HepG2 (cell line): ENCODE measurements at regions of chr20 and their contacts with region 1.

Region 1: DNA sequence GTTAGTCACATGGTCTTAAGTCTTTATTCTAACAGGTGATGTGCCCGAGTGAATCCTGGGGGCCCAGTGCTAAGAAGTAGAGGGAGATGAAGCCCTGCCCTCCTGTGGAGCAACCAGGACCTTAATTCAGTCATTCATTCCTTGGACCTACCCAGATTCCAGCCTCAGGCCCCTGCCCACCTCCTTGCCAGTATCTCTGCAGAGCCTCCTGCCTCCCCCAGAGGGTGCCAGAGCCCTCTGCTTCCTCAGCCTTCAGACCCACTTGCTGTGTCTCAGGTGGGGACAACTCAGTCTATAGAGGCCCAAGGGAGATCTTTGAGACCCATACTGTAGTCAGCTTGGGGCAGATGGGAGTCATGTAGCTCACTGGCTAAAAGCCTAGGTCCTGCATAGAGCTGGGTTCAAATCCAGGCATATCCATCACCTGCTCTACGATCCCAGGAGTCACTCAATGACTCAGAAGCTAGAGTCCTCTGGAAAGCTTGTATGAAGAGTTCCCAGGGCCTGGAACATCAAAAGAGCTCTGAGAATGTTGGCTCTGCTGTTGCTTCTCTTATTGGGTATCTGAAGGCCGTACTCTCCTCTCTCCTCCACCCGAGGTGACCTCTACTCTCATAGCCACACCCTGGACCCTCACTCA is 3.9 kb upstream of the SIGLEC1 start:
- DNase-seq: peak; percentile 65
- ATAC-seq: peak; percentile 94
- H3K4me3 ChIP-seq: no peak overlapping the region
- H3K27ac ChIP-seq: no peak overlapping the region
- H3K4me1 ChIP-seq: no peaks in the 10 kb centered on the region
- H3K27me3 ChIP-seq: peaks cover 0 to 26% of the 10 kb centered on the region in 2 experiments; a peak in 4 of 5 replicates
- CTCF ChIP-seq: peak; percentile 96
- EP300 ChIP-seq: no peak
- POLR2A ChIP-seq: no peak
- RAD21 ChIP-seq: peak; percentile 86

Region 2: GRCh38 chr20:3727401-3728021 is 11.2 kb after region 1 on chr20:
- CTCF ChIA-PET with region 1: no interaction called
- POLR2A ChIA-PET with region 1: no interaction called
- in situ Hi-C with region 1: no loop called
- intact Hi-C with region 1: no loop called
- DNase-seq: no peak
- ATAC-seq: no peak
- H3K4me3 ChIP-seq: no peak overlapping the region
- H3K27ac ChIP-seq: no peak overlapping the region
- H3K4me1 ChIP-seq: no peaks in the 10 kb centered on the region
- H3K27me3 ChIP-seq: peaks cover 18 to 62% of the 10 kb centered on the region in 2 experiments
- CTCF ChIP-seq: no peak
- EP300 ChIP-seq: no peak
- POLR2A ChIP-seq: no peak
- RAD21 ChIP-seq: no peak

Region 3: DNA sequence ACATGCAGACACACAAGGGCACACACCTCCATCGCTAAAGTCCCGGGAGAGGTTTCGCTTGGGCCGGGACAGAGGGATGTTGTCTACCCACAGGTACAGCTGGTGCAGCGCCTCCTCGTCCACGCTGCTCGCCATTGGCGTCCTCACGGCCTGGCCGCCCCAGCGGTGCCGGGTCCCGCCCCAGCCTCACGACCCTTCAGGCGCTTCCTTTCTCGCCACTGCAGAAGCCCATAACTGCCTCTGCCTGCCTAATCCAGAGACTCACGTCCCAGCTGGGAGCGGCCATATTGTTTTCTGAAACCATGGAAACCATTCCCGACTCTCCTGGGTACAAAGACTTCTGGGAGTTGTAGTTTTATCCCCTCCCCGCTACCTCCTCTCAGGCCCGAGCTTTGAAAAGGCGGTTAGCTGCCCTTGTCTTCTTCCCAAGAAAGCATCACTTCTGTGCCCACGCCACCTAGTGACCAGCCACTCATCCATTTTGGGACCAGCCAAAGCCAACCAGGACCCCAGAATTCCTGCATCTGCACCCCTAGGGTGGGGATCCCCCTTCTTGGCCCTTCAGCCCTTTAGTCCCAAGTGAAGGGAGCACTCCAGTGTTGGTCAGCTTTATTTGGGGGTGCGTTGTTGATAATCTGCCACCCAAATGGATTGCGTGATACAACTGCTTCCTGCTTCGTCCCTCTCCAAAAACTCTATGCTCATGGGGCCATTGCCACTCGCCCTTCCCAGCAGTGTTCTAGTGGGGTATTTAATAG is 65.0 kb after region 1 on chr20 and contains the start of gene SPEF1:
- CTCF ChIA-PET with region 1: interaction called, 7 read pairs
- POLR2A ChIA-PET with region 1: interaction called, 3 read pairs
- in situ Hi-C with region 1: no loop called
- intact Hi-C with region 1: loop called (anchors 1 kb)
- DNase-seq: peak; percentile 98
- ATAC-seq: peak; percentile 80
- H3K4me3 ChIP-seq: peak within 1 kb of the TSS; percentile 51 to 75 (median 59); a peak in 5 of 6 replicates
- H3K27ac ChIP-seq: no peak within 1 kb of the TSS
- H3K4me1 ChIP-seq: peaks cover 76% of the 10 kb centered on the region
- H3K27me3 ChIP-seq: peaks cover 2 to 31% of the 10 kb centered on the region in 2 experiments
- CTCF ChIP-seq: peak; percentile 79
- EP300 ChIP-seq: no peak
- POLR2A ChIP-seq: no peak
- RAD21 ChIP-seq: peak; percentile 63
- total RNA-seq, gene SPEF1: 0.27 and 0.32 TPM in 2 replicates

Region 4: GRCh38 chr20:4082406-4083097 is 366.2 kb after region 1 on chr20:
- CTCF ChIA-PET with region 1: no interaction called
- POLR2A ChIA-PET with region 1: no interaction called
- in situ Hi-C with region 1: no loop called
- intact Hi-C with region 1: loop called (anchors 1 kb)
- DNase-seq: peak; percentile 89
- ATAC-seq: peak; percentile 70
- H3K4me3 ChIP-seq: peak overlapping the region; percentile 4 to 63 (median 34); a peak in 4 of 6 replicates
- H3K27ac ChIP-seq: no peak overlapping the region
- H3K4me1 ChIP-seq: peaks cover 39% of the 10 kb centered on the region
- H3K27me3 ChIP-seq: peaks cover 0 to 8% of the 10 kb centered on the region in 2 experiments; a peak in 2 of 5 replicates
- CTCF ChIP-seq: peak; percentile 19; the same call in 1 of the 2 replicates
- EP300 ChIP-seq: no peak
- POLR2A ChIP-seq: no peak
- RAD21 ChIP-seq: no peak